Panc1 (cell line): ENCODE measurements at regions of chr10 and their contacts with region 1.

Region 1: DNA sequence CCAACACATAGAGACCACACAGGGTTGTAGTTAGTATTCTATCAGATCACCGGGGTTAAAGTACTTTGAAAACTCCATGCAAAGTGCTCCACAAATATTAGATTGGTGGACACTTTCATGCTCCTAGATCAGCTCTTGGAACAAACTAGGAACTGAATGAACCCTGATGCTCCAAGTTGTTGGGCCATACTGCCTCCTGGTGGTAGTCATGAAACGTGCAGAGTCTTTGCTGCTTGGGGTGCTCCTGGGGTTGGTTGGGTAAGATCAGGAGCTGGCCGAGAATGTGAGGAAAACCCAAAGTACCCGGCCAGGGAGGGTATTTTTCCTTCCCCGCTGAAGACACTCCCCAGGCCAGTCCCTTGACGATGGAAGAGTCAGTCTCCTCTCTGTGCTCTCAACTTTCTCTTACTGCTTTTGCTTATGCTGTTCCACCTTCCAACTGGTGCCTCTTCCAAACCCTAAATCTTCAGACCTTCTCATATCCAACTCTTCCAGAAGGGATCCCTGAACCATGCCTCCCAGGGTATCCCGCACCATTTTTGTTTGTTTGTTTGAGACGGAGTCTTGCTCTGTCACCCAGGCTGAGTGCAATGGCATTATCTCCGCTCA is 920 bp upstream of the RPEL1 start:
- DNase-seq: peak; percentile 75
- ATAC-seq: peak; percentile 78
- H3K4me3 ChIP-seq: no peak overlapping the region
- H3K27ac ChIP-seq: peak overlapping the region; percentile 71; the same call in 1 of the 2 replicates
- H3K4me1 ChIP-seq: peaks cover 25% of the 10 kb centered on the region
- H3K27me3 ChIP-seq: no peaks in the 10 kb centered on the region
- CTCF ChIP-seq: peak; percentile 97

Region 2: DNA sequence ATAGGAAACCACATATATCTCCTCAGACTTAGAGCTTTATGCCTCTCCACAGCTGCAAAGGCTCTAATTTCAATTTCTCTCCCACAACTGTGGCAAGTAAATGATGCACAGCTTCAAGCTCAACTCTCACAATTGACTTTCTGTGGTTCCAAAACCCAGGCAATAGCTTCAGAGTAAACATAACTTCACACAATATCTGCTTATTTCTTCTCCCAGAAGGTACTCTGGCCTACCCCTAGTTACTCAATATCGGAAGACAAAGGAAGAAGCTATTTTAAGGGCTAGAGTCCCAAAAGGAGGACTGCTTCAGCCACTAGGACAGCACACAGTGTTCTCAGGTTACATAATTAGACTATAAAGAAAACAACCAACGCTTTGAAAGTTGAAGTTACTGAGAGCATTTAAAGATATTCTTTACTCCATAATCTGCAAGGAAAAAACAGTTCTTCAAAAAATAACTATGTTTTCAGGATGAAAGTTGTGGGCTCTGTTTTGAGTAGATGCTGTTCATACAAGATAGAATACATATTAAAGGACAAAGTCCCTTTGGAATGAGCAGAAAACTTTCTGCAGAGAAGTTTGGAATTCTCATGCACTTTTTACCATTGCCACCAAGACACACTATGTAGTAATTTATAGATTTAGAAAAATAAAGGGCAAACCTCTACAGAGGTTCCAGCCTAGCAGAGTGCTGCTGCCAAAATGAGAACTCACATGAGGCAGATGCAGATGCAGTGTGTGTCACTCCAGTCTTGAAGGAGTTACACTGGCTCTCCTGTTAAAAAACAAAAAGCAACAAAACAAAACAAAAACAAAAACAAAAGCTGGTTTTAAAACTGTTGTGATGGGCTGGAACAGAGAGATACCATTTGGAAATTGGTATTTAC is 133.5 kb before region 1 on chr10:
- CTCF ChIA-PET with region 1: interaction called, 3 read pairs
- POLR2A ChIA-PET with region 1: no interaction called
- in situ Hi-C with region 1: no loop called
- intact Hi-C with region 1: loop called (anchors 10 kb)
- DNase-seq: no peak
- ATAC-seq: no peak
- H3K4me3 ChIP-seq: no peak overlapping the region
- H3K27ac ChIP-seq: no peak overlapping the region
- H3K4me1 ChIP-seq: peaks cover 17% of the 10 kb centered on the region
- H3K27me3 ChIP-seq: no peaks in the 10 kb centered on the region
- CTCF ChIP-seq: no peak

Region 3: GRCh38 chr10:103231047-103231551 is 13.7 kb before region 1 on chr10:
- CTCF ChIA-PET with region 1: interaction called, 13 read pairs
- POLR2A ChIA-PET with region 1: interaction called, 18 read pairs
- in situ Hi-C with region 1: no loop called
- intact Hi-C with region 1: no loop called
- DNase-seq: peak; percentile 97
- ATAC-seq: peak; percentile 86
- H3K4me3 ChIP-seq: 0 out of 4 replicates have a peak overlapping the region, but pooled peaks of 1 of the 2 experiments have one; percentile 13
- H3K27ac ChIP-seq: peak overlapping the region; percentile 86
- H3K4me1 ChIP-seq: peaks cover 56% of the 10 kb centered on the region
- H3K27me3 ChIP-seq: no peaks in the 10 kb centered on the region
- CTCF ChIP-seq: no peak

Region 4: DNA sequence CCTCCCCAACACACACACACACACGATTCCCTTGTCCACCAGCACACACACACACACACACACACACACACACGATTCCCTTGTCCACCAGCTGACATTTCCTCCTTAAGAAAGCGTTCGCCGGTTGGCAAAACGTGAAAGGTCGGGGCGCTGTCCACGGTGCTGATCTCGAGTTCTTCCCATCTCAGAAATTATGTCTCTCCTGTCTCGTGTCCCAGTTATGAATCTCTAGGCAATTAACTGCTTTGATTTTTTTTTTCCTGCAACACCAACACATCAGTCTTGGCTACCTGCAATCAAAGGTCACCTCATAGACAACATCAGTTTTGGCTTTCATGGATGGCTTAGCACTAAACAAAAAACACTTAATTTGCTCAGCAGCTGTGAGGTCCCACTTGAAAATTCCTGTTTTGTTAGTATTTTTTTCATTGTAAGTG is 34.1 kb after region 1 on chr10:
- CTCF ChIA-PET with region 1: no interaction called
- POLR2A ChIA-PET with region 1: interaction called, 12 read pairs
- in situ Hi-C with region 1: no loop called
- intact Hi-C with region 1: no loop called
- DNase-seq: no peak
- ATAC-seq: no peak
- H3K4me3 ChIP-seq: no peak overlapping the region
- H3K27ac ChIP-seq: no peak overlapping the region
- H3K4me1 ChIP-seq: 0 out of 2 replicates have a peak, but pooled peaks cover 3% of the 10 kb centered on the region
- H3K27me3 ChIP-seq: peaks cover 10% of the 10 kb centered on the region
- CTCF ChIP-seq: no peak

Region 5: DNA sequence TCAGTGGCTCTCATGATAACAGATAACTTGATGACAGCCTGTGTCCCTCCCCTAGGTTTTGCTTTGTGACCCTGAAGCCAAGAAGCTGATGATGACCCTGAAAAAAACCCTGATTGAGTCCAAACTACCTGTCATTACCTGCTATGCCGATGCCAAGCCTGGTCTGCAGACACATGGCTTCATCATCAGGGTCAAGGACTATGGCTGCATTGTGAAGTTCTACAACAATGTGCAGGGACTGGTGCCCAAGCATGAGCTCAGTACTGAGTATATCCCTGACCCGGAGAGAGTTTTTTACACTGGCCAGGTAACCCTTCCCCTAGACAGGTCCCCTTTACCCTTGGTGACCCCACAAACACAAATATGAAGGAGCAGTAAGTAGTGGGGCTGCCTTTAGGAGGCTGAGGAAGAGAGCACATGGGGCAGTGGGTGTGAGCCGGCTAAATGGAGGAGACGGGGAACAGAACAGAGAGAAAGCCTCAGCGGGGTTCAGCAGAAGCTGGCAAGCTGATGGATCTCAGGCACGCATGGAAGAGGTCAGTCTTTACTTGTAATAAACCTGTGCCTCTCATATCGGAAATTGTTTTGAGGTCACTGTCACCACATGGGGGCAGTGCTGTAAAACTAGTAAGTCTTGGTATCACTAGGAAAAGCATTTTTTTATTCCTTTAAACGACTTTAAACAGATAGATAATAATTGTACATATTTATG is 171.8 kb after region 1 on chr10:
- CTCF ChIA-PET with region 1: no interaction called
- POLR2A ChIA-PET with region 1: no interaction called
- in situ Hi-C with region 1: no loop called
- intact Hi-C with region 1: no loop called
- DNase-seq: peak; percentile 25
- ATAC-seq: peak; percentile 60; the same call in 1 of the 2 replicates
- H3K4me3 ChIP-seq: no peak overlapping the region
- H3K27ac ChIP-seq: no peak overlapping the region
- H3K4me1 ChIP-seq: no peaks in the 10 kb centered on the region
- H3K27me3 ChIP-seq: no peaks in the 10 kb centered on the region
- CTCF ChIP-seq: peak; percentile 78; the same call in 1 of the 2 replicates

Region 6: DNA sequence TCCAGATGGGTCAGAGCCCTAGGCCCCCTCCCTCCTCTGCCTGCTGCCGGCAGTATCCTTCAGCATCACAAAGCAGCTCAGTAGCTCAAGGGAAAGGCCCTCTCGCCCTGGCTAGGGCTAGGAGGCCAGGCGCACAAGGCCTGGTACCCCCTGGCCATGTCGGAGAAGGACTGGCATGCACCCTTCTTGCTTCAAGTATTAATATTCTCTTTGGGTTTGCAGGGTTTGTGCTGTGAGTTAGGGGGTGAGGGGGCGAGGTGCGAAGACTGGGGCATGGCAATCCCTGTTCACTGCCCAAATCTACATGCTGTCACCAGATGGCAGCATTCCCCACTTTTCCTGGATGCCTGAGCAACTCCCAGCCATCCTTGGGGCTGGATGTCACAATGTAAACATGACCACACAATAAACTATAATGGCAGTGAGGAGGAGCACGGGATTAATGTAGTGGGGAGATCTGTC is 353.9 kb after region 1 on chr10:
- CTCF ChIA-PET with region 1: no interaction called
- POLR2A ChIA-PET with region 1: no interaction called
- in situ Hi-C with region 1: no loop called
- intact Hi-C with region 1: no loop called
- DNase-seq: peak; percentile 30
- ATAC-seq: peak; percentile 92
- H3K4me3 ChIP-seq: no peak overlapping the region
- H3K27ac ChIP-seq: no peak overlapping the region
- H3K4me1 ChIP-seq: no peaks in the 10 kb centered on the region; the same call in 1 of the 2 replicates
- H3K27me3 ChIP-seq: no peaks in the 10 kb centered on the region
- CTCF ChIP-seq: peak; percentile 91

Region 7: DNA sequence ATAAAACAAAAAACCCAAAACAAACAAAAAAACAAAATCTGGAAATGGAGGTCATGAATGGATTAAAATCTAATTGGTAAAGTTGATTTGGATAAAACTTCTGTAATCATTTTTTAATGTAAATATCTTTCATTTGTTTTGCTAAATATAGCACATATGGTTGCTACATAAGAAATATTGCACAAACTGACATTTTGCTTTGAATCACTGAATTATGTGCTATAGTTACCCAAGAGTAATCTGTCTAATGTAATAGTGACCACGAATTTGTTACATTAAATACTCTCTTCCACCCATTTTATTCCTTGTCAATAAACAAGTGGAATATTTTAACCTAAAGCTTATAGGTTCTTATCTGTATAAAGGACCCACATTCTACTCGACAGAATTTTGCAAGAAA is 1115.0 kb after region 1 on chr10:
- CTCF ChIA-PET with region 1: no interaction called
- POLR2A ChIA-PET with region 1: no interaction called
- in situ Hi-C with region 1: no loop called
- intact Hi-C with region 1: no loop called
- DNase-seq: no peak
- ATAC-seq: no peak
- H3K4me3 ChIP-seq: no peak overlapping the region
- H3K27ac ChIP-seq: no peak overlapping the region
- H3K4me1 ChIP-seq: no peaks in the 10 kb centered on the region
- H3K27me3 ChIP-seq: no peaks in the 10 kb centered on the region
- CTCF ChIP-seq: no peak